ENCODE measurements at regions of chr14 and their contacts with region 1.

Region 1: DNA sequence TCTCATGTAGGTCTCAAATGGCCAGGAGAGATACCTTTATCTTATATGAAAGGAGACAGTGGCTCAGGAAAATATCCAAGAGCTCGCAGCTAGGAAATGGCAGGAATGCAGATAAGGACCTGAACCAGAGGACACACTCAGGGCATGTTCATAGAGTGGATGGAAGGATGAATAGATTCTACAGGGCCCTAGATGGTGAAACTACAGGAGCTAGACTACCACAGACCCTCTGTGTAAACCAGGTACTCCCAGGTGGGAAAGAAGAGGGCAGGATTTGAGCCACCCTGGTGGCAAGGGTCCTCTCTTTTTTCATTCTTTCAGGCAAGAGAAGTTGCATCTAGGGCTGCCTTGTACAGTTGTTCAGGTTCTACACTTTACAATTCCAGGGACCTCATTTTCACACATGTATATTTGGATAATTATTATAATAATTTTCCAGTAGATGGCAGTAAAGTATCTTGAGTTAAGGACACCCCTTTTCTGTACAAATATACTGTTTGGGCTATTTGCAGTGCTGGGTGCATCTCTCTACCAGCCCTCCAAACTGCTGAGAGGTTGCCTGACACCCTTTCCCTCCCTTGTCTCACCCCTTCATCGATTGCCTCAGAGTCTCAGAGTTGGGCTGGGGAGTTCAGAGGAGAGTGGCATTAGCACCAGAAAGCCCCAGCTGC is 10.5 kb upstream of the ZDHHC22 start:
- DNase-seq: no peak
- ATAC-seq: peak; percentile 67
- H3K4me3 ChIP-seq: no peak overlapping the region
- H3K27ac ChIP-seq: no peak overlapping the region
- H3K4me1 ChIP-seq: no peaks in the 10 kb centered on the region
- H3K27me3 ChIP-seq: peaks cover 0 to 11% of the 10 kb centered on the region in 2 experiments; a peak in 3 of 5 replicates
- CTCF ChIP-seq: peak; percentile 43
- EP300 ChIP-seq: no peak
- POLR2A ChIP-seq: no peak
- RAD21 ChIP-seq: no peak

Region 2: DNA sequence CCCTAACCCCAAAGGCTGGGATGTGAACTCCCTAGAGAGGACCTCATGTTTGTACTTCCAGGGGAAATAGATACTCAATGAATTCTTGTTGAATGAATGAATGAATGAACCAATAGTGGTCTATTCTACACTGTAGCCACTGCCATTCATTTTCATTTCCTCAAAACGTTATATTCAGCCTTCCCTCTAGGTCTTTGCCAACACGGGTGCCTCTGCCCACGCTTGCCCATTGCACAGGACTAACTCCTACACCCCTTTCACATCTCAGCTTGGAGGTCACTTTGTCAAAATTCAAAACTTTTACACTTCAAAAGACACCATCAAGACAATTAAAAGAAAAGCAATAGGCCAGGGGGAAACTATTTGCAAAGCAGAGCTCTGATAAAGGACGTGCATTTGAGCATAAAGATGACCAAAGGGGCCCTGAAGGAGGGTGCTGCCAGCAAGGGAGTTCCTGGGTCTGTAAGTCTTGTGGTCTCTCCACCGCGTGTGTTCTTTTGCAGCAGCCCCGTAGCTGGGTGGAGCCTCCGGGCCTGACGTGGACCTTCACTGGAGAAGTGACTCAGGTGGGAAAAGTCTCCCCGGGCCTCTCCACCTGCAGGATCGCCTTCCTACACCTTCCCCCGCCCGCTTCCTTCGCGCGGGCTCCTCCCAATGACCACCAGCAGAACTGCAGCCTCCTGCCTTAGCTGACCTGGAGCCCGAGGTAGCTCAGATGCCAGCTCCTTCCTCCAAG is 61.1 kb after region 1 on chr14:
- CTCF ChIA-PET with region 1: interaction called, 6 read pairs
- POLR2A ChIA-PET with region 1: no interaction called
- in situ Hi-C with region 1: no loop called
- intact Hi-C with region 1: loop called (anchors 1 kb)
- DNase-seq: peak; percentile 13
- ATAC-seq: peak; percentile 93
- H3K4me3 ChIP-seq: no peak overlapping the region
- H3K27ac ChIP-seq: no peak overlapping the region
- H3K4me1 ChIP-seq: no peaks in the 10 kb centered on the region
- H3K27me3 ChIP-seq: peaks cover 0 to 1% of the 10 kb centered on the region in 2 experiments; a peak in 1 of 5 replicates
- CTCF ChIP-seq: peak; percentile 88
- EP300 ChIP-seq: no peak
- POLR2A ChIP-seq: no peak
- RAD21 ChIP-seq: peak; percentile 76

Region 3: DNA sequence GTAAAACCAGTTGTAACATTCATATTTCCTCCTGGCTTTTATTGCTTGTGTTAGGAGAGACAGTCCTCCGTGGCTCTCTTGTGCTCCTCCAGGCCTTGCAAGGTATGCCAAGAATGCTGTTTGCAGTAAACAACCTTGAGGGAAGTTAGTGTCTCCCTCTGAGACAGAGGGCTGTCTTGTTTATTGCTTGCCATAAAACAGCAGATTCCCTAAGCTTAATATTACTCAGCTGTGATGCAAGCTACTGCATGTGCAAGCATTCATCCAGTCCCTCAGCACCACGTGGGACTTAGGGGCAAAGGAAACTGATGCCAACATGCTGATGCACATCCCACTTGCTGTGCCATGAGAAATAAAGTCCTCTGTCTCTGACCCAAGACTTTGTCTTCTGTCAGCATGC is 162.0 kb after region 1 on chr14:
- CTCF ChIA-PET with region 1: interaction called, 3 read pairs
- POLR2A ChIA-PET with region 1: no interaction called
- in situ Hi-C with region 1: no loop called
- intact Hi-C with region 1: loop called (anchors 5 kb)
- DNase-seq: no peak
- ATAC-seq: no peak
- H3K4me3 ChIP-seq: no peak overlapping the region
- H3K27ac ChIP-seq: no peak overlapping the region
- H3K4me1 ChIP-seq: peaks cover 65% of the 10 kb centered on the region
- H3K27me3 ChIP-seq: no peaks in the 10 kb centered on the region
- CTCF ChIP-seq: no peak
- EP300 ChIP-seq: no peak
- POLR2A ChIP-seq: no peak
- RAD21 ChIP-seq: no peak

Region 4: GRCh38 chr14:77436042-77436441 is 284.0 kb after region 1 on chr14:
- CTCF ChIA-PET with region 1: no interaction called
- POLR2A ChIA-PET with region 1: no interaction called
- in situ Hi-C with region 1: no loop called
- intact Hi-C with region 1: no loop called
- DNase-seq: no peak
- ATAC-seq: no peak
- H3K4me3 ChIP-seq: no peak overlapping the region
- H3K27ac ChIP-seq: no peak overlapping the region
- H3K4me1 ChIP-seq: no peaks in the 10 kb centered on the region
- H3K27me3 ChIP-seq: no peaks in the 10 kb centered on the region
- CTCF ChIP-seq: no peak
- EP300 ChIP-seq: no peak
- POLR2A ChIP-seq: no peak
- RAD21 ChIP-seq: no peak

Region 5: DNA sequence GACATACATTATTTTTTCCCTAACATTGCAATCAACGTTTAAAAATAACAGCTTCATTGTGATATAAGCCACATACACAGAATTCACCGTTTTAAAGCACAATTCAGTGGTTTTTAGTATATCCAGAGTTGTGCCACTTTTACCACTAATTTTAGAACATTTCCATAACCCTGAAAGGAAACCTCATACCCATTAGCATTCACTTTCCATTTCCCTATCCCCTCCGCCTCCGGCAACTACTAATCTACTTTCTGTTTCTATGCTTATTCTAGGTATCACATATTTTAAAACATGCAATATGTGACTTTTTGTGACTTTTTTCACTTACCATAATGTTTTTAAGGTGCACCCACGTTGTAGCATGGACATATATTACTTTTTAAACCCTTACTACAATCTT is 402.2 kb after region 1 on chr14:
- CTCF ChIA-PET with region 1: no interaction called
- POLR2A ChIA-PET with region 1: no interaction called
- in situ Hi-C with region 1: no loop called
- intact Hi-C with region 1: loop called (anchors 10 kb)
- DNase-seq: no peak
- ATAC-seq: no peak
- H3K4me3 ChIP-seq: no peak overlapping the region
- H3K27ac ChIP-seq: no peak overlapping the region
- H3K4me1 ChIP-seq: no peaks in the 10 kb centered on the region
- H3K27me3 ChIP-seq: no peaks in the 10 kb centered on the region
- CTCF ChIP-seq: no peak
- EP300 ChIP-seq: no peak
- POLR2A ChIP-seq: no peak
- RAD21 ChIP-seq: no peak